Mammary epithelial cell (primary cell): ENCODE measurements at regions of chr3 and their contacts with region 1.

Region 1: DNA sequence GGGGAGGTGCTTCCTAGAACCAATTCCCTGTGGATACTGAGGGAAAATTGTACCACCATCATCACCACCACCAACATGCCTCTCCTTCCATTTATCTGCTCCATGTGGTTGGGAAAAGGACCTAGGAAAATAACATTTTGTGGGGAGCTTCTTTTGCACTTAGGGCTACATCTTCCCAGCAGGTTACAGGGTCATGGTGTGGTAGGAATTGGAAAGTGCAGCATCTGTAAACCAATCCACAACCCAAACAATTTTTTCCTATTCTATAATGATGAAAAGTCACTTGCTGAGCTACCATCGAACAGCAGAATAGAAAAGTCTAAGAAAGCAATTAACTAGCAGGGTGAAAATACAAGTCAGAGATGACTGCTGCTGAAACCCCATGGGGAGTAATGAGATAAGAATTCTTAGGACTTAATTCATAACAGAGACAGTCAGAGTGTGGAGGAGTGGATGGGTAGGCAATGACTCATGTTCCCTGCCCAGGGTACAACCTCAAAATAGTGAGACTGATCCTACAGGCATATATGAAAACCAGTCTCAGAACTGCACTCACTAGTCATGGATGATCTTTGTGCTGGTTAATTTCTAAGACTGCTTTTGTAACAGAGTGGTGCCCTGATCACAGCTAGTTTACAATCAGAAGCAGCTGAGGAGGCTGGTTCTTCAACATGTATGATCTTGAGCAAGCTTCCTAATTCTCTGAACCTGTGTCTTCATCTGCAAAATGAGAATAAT is 38.1 kb upstream of the LEKR1 start:
- DNase-seq: peak; percentile 97
- H3K4me3 ChIP-seq: no peak overlapping the region
- H3K27ac ChIP-seq: peak overlapping the region; percentile 99
- H3K4me1 ChIP-seq: peaks cover 60% of the 10 kb centered on the region
- H3K27me3 ChIP-seq: no peaks in the 10 kb centered on the region
- CTCF ChIP-seq: peak in 1 of 2 donors; percentile 6

Region 2: DNA sequence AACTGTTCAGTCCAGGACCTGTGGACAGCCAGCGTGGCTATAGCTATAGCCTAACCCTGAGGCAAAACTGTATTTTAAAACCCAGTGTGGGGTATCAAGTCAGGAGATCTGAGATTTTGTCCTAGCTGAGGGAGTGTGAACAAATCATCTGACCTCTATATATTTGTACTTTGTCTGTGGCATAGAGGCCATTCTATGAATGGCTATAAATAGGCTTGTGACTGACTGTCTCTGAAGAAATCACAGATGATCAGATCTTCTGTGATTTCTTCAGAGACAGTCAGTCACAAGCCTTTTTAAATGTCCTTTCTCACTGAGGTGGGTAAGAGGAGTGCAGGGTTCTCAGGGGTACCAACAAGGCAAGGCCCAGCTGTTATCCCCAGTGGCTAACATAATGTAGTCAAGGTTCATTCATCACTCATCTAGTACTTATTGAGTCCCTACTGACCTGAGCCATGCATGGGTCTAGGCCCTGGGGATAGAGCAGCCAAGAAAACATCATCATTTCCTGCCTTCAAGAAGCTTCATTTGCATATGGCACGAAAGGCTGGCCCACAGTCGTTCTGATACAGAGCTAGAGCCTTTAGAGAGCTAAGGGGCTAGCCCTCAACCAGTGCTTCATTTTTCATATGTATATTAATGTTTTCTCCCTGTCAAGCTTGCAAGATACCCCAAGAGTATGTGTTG is 60.4 kb before region 1 on chr3:
- CTCF ChIA-PET with region 1: no interaction called
- dilution Hi-C with region 1: no loop called
- in situ Hi-C with region 1: no loop called
- intact Hi-C with region 1: loop called (anchors 2 kb)
- DNase-seq: no peak
- H3K4me3 ChIP-seq: no peak overlapping the region
- H3K27ac ChIP-seq: peak overlapping the region; percentile 54
- H3K4me1 ChIP-seq: peaks cover 39% of the 10 kb centered on the region
- H3K27me3 ChIP-seq: no peaks in the 10 kb centered on the region
- CTCF ChIP-seq: no peak

Region 3: DNA sequence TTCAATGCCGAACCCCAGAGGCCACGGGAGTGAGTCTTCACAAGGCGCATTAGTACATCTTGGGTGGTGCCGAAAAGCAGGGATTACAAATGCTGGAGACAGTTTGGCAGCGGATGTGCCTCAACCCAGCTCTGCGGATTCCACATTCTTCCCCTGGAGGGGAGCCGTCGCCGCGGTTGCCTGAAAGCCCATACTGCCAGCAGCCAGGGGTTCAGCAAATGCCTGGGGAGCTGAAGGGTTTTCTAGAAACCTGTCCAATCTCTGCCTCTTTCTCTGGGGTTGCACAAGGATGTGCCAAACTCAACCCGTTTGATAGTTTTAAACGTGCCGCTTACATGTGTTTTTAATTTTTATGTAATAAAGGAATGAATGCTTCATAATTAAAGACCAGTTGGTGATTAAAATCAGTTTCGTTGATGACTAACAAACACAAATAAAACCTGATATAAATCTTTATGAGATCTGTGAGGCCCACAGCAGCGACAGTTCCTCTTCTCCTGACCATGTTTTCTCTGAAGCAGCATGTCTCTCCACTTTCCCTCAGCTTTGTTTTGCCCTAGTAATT is 36.6 kb before region 1 on chr3:
- CTCF ChIA-PET with region 1: no interaction called
- dilution Hi-C with region 1: no loop called
- in situ Hi-C with region 1: no loop called
- intact Hi-C with region 1: loop called (anchors 2 kb)
- DNase-seq: peak; percentile 87
- H3K4me3 ChIP-seq: peak overlapping the region in 1 of 3 experiments; percentile 2
- H3K27ac ChIP-seq: peak overlapping the region; percentile 94
- H3K4me1 ChIP-seq: peaks cover 27% of the 10 kb centered on the region
- H3K27me3 ChIP-seq: no peaks in the 10 kb centered on the region
- CTCF ChIP-seq: peak in 1 of 2 donors; percentile 29

Region 4: DNA sequence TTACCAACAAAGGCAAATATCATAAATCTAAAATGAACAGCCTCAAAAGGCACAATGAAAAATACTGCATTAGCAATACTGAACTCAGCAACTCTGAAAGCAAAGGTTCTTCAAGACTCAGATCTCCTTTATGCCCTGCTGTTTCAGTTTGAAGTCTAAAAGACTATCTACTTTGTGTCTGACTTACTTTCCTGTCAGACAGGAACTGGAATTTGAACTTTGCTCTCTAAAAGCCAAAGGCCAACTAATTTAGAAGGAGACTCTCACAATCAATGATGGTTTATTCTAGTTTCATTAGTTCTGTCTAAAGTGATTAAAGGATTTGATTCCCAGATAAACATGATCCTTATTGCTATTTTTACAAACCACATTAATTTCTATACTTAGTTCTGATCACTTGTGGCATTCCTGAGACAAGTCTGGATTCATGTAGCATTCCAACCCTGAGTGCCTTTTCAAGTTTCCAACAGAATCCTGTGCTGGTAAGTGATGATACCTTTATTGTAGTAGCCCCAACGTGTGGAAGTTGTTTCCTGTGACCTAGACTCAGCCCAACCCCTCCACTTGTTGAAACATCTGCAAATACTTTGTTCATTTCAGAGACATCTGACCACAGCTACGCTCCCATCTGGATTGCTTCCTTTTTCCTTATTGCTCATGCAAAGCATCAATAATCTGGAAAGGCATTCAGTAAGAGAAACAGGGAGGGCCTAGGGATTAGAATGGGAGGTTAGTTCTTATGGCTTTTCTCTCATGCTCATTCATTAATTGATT is 23.2 kb after region 1 on chr3:
- CTCF ChIA-PET with region 1: no interaction called
- dilution Hi-C with region 1: loop called (anchors 5 kb)
- in situ Hi-C with region 1: no loop called
- intact Hi-C with region 1: loop called (anchors 1 kb)
- DNase-seq: peak; percentile 95
- H3K4me3 ChIP-seq: no peak overlapping the region
- H3K27ac ChIP-seq: peak overlapping the region; percentile 97
- H3K4me1 ChIP-seq: peaks cover 42% of the 10 kb centered on the region
- H3K27me3 ChIP-seq: no peaks in the 10 kb centered on the region
- CTCF ChIP-seq: no peak